HCT116 (cell line): ENCODE measurements at regions of chr19 and their contacts with region 1.

Region 1: GRCh38 chr19:46614114-46614722 is 10.7 kb downstream of the PTGIR start:
- DNase-seq: peak; percentile 63
- ATAC-seq: peak; percentile 91
- H3K4me3 ChIP-seq: no peak overlapping the region
- H3K27ac ChIP-seq: no peak overlapping the region
- H3K4me1 ChIP-seq: peaks cover 0 to 22% of the 10 kb centered on the region in 2 experiments; a peak in 3 of 4 replicates
- H3K27me3 ChIP-seq: no peaks in the 10 kb centered on the region
- CTCF ChIP-seq: peak; percentile 86 to 90 (median 87)
- POLR2A ChIP-seq: no peak
- RAD21 ChIP-seq: peak; percentile 87

Region 2: DNA sequence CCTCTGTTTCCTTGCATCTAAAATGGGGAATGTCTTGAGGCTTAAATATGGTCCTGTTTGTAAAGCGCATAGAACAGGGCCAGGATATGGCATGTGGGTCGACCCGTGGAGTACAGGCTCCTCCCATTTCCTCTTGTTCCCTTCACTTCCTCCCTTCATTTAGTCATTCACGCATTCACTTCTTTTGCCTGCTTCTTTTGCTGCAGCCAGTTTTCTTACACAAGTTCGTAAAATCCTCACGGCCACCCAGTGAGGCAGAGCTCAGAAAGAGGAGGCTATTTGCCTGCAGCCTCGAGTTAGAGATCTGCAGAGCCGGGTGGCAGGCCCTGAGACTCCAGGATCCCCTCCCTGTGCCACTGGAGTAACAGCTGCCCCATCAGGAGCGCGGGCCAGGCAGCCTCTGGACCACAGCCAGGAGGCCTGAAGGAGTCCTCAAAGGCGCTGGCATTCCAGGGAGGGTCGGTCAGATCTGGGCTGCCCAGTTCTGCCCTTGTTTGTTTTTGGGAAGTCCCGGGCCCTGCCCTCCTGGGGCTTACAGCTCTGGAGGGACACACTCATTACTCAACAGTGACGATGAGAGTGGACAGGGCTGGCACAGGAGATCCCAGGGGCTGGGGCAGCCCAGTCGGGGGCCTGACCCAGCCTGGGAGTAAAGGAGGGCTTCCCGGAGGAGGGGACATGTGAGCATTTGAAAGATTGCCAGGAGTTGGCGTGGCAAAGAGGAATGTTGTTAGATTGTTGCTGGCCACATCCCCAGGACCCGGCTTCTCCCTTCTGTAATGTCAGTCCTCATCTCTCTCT is 262.8 kb before region 1 on chr19:
- CTCF ChIA-PET with region 1: no interaction called
- POLR2A ChIA-PET with region 1: no interaction called
- RAD21 ChIA-PET with region 1: no interaction called
- intact Hi-C with region 1: no loop called
- DNase-seq: no peak
- ATAC-seq: no peak
- H3K4me3 ChIP-seq: no peak overlapping the region
- H3K27ac ChIP-seq: peak overlapping the region; percentile 25; the same call in 1 of the 2 replicates
- H3K4me1 ChIP-seq: peaks cover 0 to 38% of the 10 kb centered on the region in 2 experiments; a peak in 2 of 4 replicates
- H3K27me3 ChIP-seq: no peaks in the 10 kb centered on the region
- CTCF ChIP-seq: no peak
- POLR2A ChIP-seq: no peak
- RAD21 ChIP-seq: no peak

Region 3: DNA sequence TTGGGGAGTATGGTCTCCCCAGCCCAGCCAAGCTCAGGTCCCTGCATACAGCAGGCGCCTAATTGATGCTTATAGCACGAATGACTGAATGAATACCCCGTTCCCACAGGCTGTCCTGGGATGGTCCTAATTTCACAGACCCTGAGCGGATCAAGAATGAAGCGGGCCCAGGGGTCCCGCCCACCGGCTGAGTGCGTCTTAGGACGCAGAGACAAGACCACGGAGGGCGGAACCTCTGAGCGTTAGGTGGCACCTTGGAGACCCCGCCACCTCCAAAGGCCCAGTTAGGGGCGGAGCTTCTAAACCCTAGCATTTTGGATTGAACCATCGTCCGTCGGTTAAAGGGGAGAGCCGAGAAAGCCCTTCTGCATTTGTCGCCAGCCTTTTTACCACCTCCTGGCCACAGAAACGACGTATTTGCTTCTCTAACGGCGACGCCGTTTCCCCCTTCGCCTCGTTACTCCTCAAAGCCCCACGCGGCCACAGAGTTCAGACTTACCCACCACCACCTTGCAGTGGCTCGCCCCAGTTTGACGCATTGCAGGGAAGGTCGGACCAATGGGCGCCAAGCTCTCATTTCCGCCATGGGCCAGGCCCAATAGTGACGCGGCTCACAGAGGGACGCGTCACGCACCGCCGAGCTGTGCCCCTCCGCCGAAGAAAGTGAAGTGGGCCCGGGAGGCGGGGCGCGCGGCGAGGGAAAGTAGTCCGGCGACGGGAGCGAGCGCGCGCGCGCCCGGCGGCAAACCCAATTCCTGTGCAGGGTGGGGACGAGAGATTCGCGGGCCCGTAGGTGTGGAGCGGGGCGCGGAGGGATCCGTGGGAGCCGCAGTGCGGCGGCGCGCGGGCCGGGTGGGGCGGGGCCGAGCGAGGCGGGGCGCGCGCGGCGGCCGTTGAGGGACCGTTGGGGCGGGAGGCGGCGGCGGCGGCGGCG is 13.6 kb before region 1 on chr19:
- CTCF ChIA-PET with region 1: interaction called, 15 read pairs
- POLR2A ChIA-PET with region 1: interaction called, 8 read pairs
- RAD21 ChIA-PET with region 1: no interaction called
- intact Hi-C with region 1: no loop called
- DNase-seq: peak; percentile 96
- ATAC-seq: peak; percentile 87
- H3K4me3 ChIP-seq: peak overlapping the region; percentile 91 to 94
- H3K27ac ChIP-seq: peak overlapping the region; percentile 85
- H3K4me1 ChIP-seq: peaks cover 18 to 36% of the 10 kb centered on the region in 2 experiments
- H3K27me3 ChIP-seq: no peaks in the 10 kb centered on the region
- CTCF ChIP-seq: no peak
- POLR2A ChIP-seq: peak; percentile 80
- RAD21 ChIP-seq: no peak

Region 4: DNA sequence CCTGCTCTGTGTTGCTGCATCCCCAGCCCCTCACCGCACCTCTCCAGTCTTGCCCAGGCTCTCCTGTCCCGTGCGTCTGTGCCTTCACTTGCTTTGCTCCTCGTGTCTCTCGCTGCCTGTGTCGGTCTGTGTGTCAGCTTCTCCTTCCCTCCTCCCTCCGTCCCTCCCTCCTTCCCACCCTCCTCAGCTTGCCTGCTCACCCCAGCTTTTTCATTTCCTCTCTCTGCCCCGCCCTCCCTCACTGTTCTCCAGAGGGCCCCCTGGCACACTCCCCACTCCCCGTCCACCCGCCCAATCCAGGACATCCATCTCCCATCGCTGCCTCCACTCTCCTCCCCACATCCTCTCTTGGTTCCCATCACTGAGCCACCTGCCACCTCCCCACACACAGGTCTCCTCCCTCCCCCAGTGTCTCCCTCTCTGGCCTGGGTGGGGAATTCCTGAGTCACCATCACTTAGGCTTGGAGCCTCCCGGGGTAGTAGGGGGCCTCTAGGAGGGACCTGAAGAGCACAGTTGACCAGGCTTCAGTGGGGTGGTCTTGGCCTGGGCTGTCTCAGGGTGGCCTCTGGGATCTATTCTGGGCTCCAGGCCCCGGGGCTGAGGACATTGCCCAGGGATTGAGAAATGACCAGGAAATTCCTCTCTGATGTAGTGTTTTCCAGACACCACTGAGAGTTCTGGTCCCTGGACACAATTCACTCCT is 10.9 kb after region 1 on chr19 and contains the start of gene PTGIR:
- CTCF ChIA-PET with region 1: interaction called, 11 read pairs
- POLR2A ChIA-PET with region 1: no interaction called
- RAD21 ChIA-PET with region 1: no interaction called
- intact Hi-C with region 1: no loop called
- DNase-seq: no peak
- ATAC-seq: peak; percentile 64
- H3K4me3 ChIP-seq: no peak within 1 kb of the TSS
- H3K27ac ChIP-seq: no peak within 1 kb of the TSS
- H3K4me1 ChIP-seq: peaks cover 0 to 13% of the 10 kb centered on the region in 2 experiments; a peak in 3 of 4 replicates
- H3K27me3 ChIP-seq: no peaks in the 10 kb centered on the region
- CTCF ChIP-seq: no peak
- POLR2A ChIP-seq: no peak
- RAD21 ChIP-seq: no peak
- total RNA-seq, gene PTGIR: not detected

Region 5: DNA sequence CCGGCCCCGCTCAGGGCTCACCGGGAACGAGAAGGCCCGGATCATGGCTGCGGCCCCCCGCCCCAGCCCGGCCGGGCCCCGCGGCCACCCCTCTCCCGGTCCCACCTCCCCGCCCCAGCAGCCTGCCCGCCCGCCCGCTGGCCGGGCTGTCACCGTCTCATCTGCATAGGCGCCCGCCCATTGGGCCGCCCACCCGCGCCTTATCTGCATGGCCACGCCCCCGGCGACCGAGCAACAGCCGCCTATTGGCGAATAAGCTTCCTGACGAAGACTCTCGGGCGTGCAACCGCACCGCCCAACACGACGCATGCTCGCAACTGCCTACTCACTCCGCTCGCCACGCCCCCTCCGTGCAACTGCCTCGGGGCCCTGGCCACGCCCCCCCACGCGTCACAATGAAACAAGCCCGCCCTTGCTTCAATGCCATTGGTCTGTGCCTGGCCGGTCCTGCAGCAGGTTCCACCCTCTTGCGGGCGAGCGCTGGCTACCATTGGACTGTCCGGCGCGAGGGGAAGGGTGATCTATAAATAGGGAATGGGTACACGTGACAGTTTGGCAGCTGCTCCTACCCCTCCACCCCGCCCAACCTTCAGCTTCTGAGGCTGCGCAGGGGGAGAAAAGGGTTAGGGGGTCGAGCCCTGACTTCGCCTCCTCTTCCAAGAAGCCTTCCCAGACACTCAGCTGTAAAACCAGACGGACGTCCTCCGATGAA is 47.0 kb after region 1 on chr19 and contains the start of gene DACT3:
- CTCF ChIA-PET with region 1: interaction called, 217 read pairs
- POLR2A ChIA-PET with region 1: interaction called, 9 read pairs
- RAD21 ChIA-PET with region 1: interaction called, 14 to 19 read pairs
- intact Hi-C with region 1: loop called (anchors 1 kb)
- DNase-seq: peak; percentile 99
- ATAC-seq: peak; percentile 93
- H3K4me3 ChIP-seq: peak within 1 kb of the TSS; percentile 39 to 59
- H3K27ac ChIP-seq: no peak within 1 kb of the TSS; the same call in 1 of the 2 replicates
- H3K4me1 ChIP-seq: peaks cover 14 to 29% of the 10 kb centered on the region in 2 experiments
- H3K27me3 ChIP-seq: no peaks in the 10 kb centered on the region
- CTCF ChIP-seq: no peak
- POLR2A ChIP-seq: no peak
- RAD21 ChIP-seq: no peak
- total RNA-seq, gene DACT3: 2.0 TPM

Region 6: DNA sequence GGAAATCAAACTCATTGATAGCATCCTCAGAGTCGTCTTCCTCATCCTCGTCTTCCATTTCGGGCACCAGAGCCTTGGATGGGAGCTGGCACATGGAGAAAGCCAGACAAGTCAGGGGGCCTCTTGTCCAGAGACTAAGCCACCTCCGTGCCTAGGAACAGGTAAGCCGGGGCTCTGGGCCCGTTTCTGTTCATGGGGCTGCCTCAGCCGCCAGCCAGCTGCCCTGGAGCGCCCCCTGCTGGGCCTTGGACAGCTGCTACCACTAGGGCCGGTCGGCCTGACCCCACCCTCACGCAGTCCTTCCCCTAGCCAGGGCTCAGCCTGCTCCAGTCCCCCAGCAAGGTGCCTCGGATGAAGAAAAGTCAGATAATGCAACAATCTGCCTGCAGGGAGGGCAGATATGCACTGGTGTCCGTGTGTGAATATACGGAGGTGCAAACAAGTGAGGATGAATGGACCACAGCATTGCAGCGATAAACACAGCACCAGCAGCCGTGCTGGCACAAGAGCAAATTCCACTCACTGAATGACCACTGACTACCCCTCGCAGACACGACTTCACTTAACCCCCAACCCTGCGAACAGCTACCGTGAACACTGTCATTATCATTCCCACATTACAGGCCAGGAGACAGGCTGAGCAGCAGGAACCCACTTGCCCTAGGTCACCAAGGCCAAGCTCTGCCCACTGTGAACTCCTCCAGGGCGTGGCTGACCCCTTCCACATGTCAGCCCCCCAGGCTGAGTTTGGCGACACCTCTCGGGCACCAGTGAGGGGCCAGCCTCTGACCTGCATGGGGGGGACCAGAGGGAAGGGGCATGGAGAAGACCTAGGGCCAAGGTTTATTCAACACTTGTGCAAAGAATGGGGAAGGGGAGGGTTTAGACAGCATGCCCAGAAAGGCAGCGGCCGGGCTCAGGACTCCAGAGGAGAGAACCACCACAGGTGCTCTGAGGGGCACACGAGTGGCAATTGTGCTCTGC is 114.8 kb after region 1 on chr19:
- CTCF ChIA-PET with region 1: interaction called, 4 read pairs
- POLR2A ChIA-PET with region 1: no interaction called
- RAD21 ChIA-PET with region 1: no interaction called
- intact Hi-C with region 1: loop called (anchors 10 kb)
- DNase-seq: no peak
- ATAC-seq: peak; percentile 90
- H3K4me3 ChIP-seq: no peak overlapping the region
- H3K27ac ChIP-seq: no peak overlapping the region
- H3K4me1 ChIP-seq: peaks cover 0 to 16% of the 10 kb centered on the region in 2 experiments; a peak in 2 of 4 replicates
- H3K27me3 ChIP-seq: no peaks in the 10 kb centered on the region
- CTCF ChIP-seq: peak; percentile 67 to 94 (median 92)
- POLR2A ChIP-seq: no peak
- RAD21 ChIP-seq: peak; percentile 77